ENCODE measurements at regions of chr12 and their contacts with region 1.

Region 1: GRCh38 chr12:76083904-76084862 is at the start of gene NAP1L1:
- DNase-seq: peak; percentile 97
- H3K4me3 Mint-ChIP-seq: peak within 1 kb of the TSS; percentile 94
- H3K27ac Mint-ChIP-seq: peak within 1 kb of the TSS; percentile 98
- H3K4me1 Mint-ChIP-seq: peaks cover 47% of the 10 kb centered on the region
- H3K27me3 Mint-ChIP-seq: no peaks in the 10 kb centered on the region
- total RNA-seq, gene NAP1L1: 1,078 to 1,092 TPM

Region 2: DNA sequence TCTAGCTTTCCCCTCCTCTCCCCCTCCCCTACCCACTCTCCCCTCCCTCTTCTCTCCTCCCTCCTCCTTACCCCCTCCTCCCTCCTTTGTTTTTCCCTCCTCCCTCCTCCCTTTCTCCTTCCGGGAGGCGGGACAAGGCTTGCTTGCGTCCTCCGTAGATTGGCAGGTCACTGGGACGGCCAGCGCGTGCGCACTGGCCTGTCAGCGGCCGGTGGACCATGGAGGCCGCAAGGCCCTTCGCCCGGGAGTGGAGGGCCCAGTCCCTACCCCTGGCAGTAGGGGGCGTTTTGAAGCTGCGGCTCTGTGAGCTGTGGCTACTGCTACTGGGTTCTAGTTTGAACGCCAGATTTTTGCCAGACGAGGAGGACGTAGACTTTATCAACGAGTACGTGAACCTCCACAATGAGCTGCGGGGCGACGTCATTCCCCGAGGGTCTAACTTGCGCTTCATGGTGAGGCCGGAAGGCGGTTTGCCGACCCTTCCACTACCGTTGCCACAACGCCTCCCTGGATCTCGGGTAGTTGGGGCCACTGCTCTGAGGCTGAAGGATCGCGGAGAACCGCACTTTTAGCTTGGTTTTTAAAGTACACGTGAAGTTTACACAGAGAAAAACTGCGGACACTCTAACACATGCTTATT is 693.2 kb before region 1 on chr12 and contains the start of gene GLIPR1L2:
- CTCF ChIA-PET with region 1: no interaction called
- intact Hi-C with region 1: loop called (anchors 1 kb)
- DNase-seq: peak; percentile 93
- H3K4me3 Mint-ChIP-seq: peak within 1 kb of the TSS; percentile 87
- H3K27ac Mint-ChIP-seq: peak within 1 kb of the TSS; percentile 89
- H3K4me1 Mint-ChIP-seq: peaks cover 27% of the 10 kb centered on the region
- H3K27me3 Mint-ChIP-seq: no peaks in the 10 kb centered on the region
- total RNA-seq, gene GLIPR1L2: 0.33 to 0.35 TPM

Region 3: GRCh38 chr12:75738486-75738885 is 345.7 kb before region 1 on chr12:
- CTCF ChIA-PET with region 1: no interaction called
- intact Hi-C with region 1: no loop called
- DNase-seq: peak; percentile 37
- H3K4me3 Mint-ChIP-seq: no peak overlapping the region
- H3K27ac Mint-ChIP-seq: no peak overlapping the region
- H3K4me1 Mint-ChIP-seq: peaks cover 16% of the 10 kb centered on the region
- H3K27me3 Mint-ChIP-seq: peaks cover 7% of the 10 kb centered on the region

Region 4: GRCh38 chr12:75977952-75978671 is 106.1 kb before region 1 on chr12:
- CTCF ChIA-PET with region 1: no interaction called
- intact Hi-C with region 1: loop called (anchors 1 kb)
- DNase-seq: peak; percentile 90
- H3K4me3 Mint-ChIP-seq: peak overlapping the region; percentile 57
- H3K27ac Mint-ChIP-seq: peak overlapping the region; percentile 99
- H3K4me1 Mint-ChIP-seq: peaks cover 60% of the 10 kb centered on the region
- H3K27me3 Mint-ChIP-seq: no peaks in the 10 kb centered on the region

Region 5: GRCh38 chr12:76143343-76144244 is 59.4 kb after region 1 on chr12:
- CTCF ChIA-PET with region 1: no interaction called
- intact Hi-C with region 1: loop called (anchors 2 kb)
- DNase-seq: peak; percentile 39
- H3K4me3 Mint-ChIP-seq: no peak overlapping the region
- H3K27ac Mint-ChIP-seq: no peak overlapping the region
- H3K4me1 Mint-ChIP-seq: peaks cover 19% of the 10 kb centered on the region
- H3K27me3 Mint-ChIP-seq: no peaks in the 10 kb centered on the region

Region 6: DNA sequence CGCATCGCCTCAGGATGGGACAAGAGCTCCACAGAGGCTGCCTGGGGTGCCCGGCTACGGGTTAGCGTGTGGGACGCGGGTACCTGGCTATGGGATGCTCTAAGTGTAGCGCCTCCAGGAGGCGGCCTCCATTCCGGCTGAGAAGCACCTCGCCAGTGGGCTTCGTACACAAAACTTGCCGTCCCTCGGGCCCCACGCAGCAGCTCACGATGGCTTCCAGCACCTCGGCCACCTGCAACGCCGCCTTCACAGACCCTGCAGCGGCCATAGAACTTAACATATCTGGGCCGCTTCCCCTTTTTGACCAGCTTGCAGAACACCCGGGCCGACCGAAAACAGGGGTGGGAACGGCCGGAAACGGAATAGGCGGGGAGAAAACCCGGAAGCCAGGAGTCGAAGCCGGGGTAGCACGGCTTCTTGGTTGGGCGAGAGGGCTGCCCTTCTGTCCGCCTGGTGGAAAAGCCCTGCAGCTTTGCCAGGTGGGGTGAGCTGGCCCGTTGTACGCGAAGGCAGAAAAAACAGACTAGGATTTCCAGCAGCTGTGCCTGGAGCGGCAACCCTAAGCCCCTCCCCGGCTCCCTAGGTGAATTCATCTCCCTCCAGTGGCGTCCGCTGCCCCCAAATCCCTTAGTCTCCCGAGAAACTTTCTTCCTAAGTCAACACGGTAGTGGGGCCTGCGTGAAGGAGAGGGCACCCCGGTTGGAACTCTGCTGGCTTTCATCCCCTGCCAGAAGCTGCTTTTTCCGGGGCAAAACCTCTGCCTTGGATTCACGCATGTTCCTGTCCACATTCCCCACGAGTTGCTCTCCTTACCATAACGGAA is 264.1 kb after region 1 on chr12 and contains the start of gene BBS10:
- CTCF ChIA-PET with region 1: interaction called, 4 read pairs
- intact Hi-C with region 1: loop called (anchors 1 kb)
- DNase-seq: peak; percentile 92
- H3K4me3 Mint-ChIP-seq: peak within 1 kb of the TSS; percentile 90
- H3K27ac Mint-ChIP-seq: peak within 1 kb of the TSS; percentile 86
- H3K4me1 Mint-ChIP-seq: peaks cover 22% of the 10 kb centered on the region
- H3K27me3 Mint-ChIP-seq: no peaks in the 10 kb centered on the region
- total RNA-seq, gene BBS10: 3.3 TPM

Region 7: GRCh38 chr12:76763743-76764675 is 679.8 kb after region 1 on chr12 and contains the start of gene ZDHHC17:
- CTCF ChIA-PET with region 1: no interaction called
- intact Hi-C with region 1: loop called (anchors 1 kb)
- DNase-seq: peak; percentile 88
- H3K4me3 Mint-ChIP-seq: peak within 1 kb of the TSS; percentile 98
- H3K27ac Mint-ChIP-seq: peak within 1 kb of the TSS; percentile 91
- H3K4me1 Mint-ChIP-seq: peaks cover 38% of the 10 kb centered on the region
- H3K27me3 Mint-ChIP-seq: no peaks in the 10 kb centered on the region
- total RNA-seq, gene ZDHHC17: 19.1 to 22.2 TPM

Measured in activated naive CD4-positive, alpha-beta T cell treated with anti-CD3 and anti-CD28 coated beads for 36 hours (primary cell).